CD14-positive monocyte (primary cell): ENCODE measurements at regions of chr2 and their contacts with region 1.

Region 1: GRCh38 chr2:48420512-48421197 is 109.3 kb upstream of the STON1 start:
- DNase-seq: peak; percentile 84 to 87 (median 87)
- H3K4me3 ChIP-seq: peak overlapping the region in 1 of 3 experiments; percentile 59
- H3K4me3 Mint-ChIP-seq: peak overlapping the region; percentile 55 to 81
- H3K27ac ChIP-seq: peak overlapping the region in 1 of 2 donors; percentile 74
- H3K27ac Mint-ChIP-seq: peak overlapping the region in 6 of 7 donors; percentile 25 to 79 (median 62)
- H3K4me1 ChIP-seq: peaks cover 20 to 23% of the 10 kb centered on the region in 2 donors
- H3K4me1 Mint-ChIP-seq: peaks cover 22% of the 10 kb centered on the region
- H3K27me3 ChIP-seq: no peaks in the 10 kb centered on the region
- H3K27me3 Mint-ChIP-seq: peaks cover 0 to 5% (median 0%) of the 10 kb centered on the region in 3 donors
- CTCF ChIP-seq: peak; percentile 95

Region 2: GRCh38 chr2:47862949-47863348 is 557.7 kb before region 1 on chr2:
- intact Hi-C with region 1: loop called (anchors 5 kb)
- DNase-seq: no peak
- H3K4me3 ChIP-seq: no peak overlapping the region
- H3K4me3 Mint-ChIP-seq: no peak overlapping the region
- H3K27ac ChIP-seq: no peak overlapping the region
- H3K27ac Mint-ChIP-seq: peak overlapping the region in 1 of 7 donors; percentile 37
- H3K4me1 ChIP-seq: peaks cover 5 to 11% of the 10 kb centered on the region in 2 donors
- H3K4me1 Mint-ChIP-seq: peaks cover 19% of the 10 kb centered on the region
- H3K27me3 ChIP-seq: no peaks in the 10 kb centered on the region
- H3K27me3 Mint-ChIP-seq: no peaks in the 10 kb centered on the region
- CTCF ChIP-seq: no peak

Region 3: DNA sequence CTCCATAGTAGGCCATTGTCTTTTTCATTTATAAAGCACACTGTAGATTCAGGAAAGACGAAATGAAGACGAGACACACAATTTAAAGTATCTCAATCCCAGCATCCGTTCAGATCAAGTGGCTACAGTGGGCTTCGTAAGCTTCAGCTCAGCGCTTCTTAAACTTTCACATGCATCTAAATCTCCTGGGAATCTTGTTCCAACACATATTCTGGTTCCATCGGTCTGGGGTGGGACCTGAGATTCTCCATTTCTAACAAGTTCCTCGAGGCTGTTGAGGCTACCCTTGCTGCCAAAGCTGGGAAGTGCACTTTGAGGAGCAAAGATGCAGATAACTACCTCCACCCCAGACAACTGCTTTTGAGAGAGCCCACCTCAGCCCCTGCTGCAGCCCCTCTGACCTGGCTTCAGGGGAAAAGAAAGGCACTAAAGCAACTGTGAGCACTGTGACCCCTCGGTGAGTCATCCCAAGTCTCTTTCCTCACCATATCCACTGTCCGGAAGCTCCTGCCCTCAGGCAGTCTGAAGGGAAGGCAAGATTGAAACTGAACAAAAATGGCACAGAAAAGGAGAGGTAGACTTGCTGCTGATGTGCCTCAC is 313.2 kb before region 1 on chr2:
- intact Hi-C with region 1: loop called in 1 of 2 experiments (anchors 1 kb)
- DNase-seq: peak in 2 of 3 donors; percentile 43 to 72
- H3K4me3 ChIP-seq: no peak overlapping the region
- H3K4me3 Mint-ChIP-seq: no peak overlapping the region
- H3K27ac ChIP-seq: peak overlapping the region in 1 of 2 donors; percentile 6
- H3K27ac Mint-ChIP-seq: peak overlapping the region in 6 of 7 donors; percentile 0 to 78 (median 39)
- H3K4me1 ChIP-seq: peaks cover 35 to 52% of the 10 kb centered on the region in 2 donors
- H3K4me1 Mint-ChIP-seq: peaks cover 47% of the 10 kb centered on the region
- H3K27me3 ChIP-seq: no peaks in the 10 kb centered on the region
- H3K27me3 Mint-ChIP-seq: no peaks in the 10 kb centered on the region
- CTCF ChIP-seq: no peak